Caco-2 (cell line): ENCODE measurements at regions of chr11 and their contacts with region 1.

Region 1: DNA sequence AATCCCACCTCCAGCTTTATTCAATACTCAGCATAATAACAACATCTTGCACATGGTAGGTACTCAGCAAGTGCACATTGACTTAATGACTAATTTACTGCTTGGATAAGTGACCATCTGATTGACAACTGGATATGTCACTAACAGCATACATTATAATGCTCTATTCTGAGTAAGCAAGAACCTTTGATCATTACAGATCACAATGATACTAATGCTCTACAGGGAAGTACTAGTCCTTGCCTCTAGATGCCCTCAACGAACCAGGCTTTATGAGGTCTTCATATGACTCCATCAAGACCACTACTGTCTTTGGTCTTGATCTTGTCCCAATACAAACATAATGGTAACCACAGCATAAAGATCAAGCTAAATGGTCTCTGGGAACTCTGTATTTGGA is 167.6 kb upstream of the MTMR2 start:
- DNase-seq: no peak
- H3K4me3 ChIP-seq: no peak overlapping the region
- H3K4me3 Mint-ChIP-seq: no peak overlapping the region
- H3K27ac Mint-ChIP-seq: peak overlapping the region; percentile 94
- H3K4me1 ChIP-seq: peaks cover 45% of the 10 kb centered on the region
- H3K4me1 Mint-ChIP-seq: peaks cover 59% of the 10 kb centered on the region
- H3K27me3 ChIP-seq: no peaks in the 10 kb centered on the region
- H3K27me3 Mint-ChIP-seq: no peaks in the 10 kb centered on the region
- CTCF ChIP-seq: peak; percentile 12 to 25

Region 2: GRCh38 chr11:95443386-95443785 is 648.1 kb before region 1 on chr11:
- CTCF ChIA-PET with region 1: no interaction called
- POLR2A ChIA-PET with region 1: no interaction called
- intact Hi-C with region 1: no loop called
- DNase-seq: no peak
- H3K4me3 ChIP-seq: no peak overlapping the region
- H3K4me3 Mint-ChIP-seq: no peak overlapping the region
- H3K27ac Mint-ChIP-seq: no peak overlapping the region
- H3K4me1 ChIP-seq: no peaks in the 10 kb centered on the region
- H3K4me1 Mint-ChIP-seq: no peaks in the 10 kb centered on the region
- H3K27me3 ChIP-seq: no peaks in the 10 kb centered on the region
- H3K27me3 Mint-ChIP-seq: no peaks in the 10 kb centered on the region
- CTCF ChIP-seq: no peak

Region 3: DNA sequence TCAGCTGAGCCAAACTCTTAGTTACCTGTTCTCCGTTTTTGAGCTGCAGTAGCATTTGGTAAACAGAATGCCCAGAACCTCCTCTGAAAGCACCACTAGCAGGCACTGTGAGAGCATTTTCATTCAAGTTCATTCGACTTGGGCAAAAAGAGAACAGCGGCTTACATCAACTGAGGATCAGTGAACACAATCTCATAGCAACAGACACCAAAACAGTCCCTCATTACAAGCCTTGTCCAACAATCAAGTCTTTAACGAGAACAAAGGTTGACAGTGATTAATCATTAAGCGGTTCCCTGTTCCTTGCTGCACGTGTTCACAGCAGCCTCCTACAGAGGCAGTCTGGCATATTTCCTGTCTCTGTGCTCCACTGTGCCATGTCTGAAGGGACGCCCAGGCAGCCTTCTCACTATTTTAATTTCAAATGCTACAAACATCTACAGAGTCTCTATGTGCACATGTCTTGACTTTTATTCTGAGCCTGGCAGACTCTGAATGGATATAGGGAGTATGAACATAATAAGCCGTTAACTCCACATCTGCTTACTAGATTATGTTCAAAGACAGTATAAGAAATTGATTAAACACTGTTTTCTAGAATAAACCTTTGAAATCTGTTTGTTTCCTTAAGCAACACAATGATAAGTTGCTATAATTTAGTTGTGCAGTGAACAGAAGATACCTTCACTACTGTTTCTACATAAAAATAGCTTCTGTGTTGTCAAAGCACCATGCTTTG is 79.2 kb before region 1 on chr11:
- CTCF ChIA-PET with region 1: no interaction called
- POLR2A ChIA-PET with region 1: no interaction called
- intact Hi-C with region 1: loop called (anchors 2 kb)
- DNase-seq: peak; percentile 62 to 69
- H3K4me3 ChIP-seq: no peak overlapping the region
- H3K4me3 Mint-ChIP-seq: no peak overlapping the region
- H3K27ac Mint-ChIP-seq: no peak overlapping the region
- H3K4me1 ChIP-seq: peaks cover 32% of the 10 kb centered on the region
- H3K4me1 Mint-ChIP-seq: peaks cover 14% of the 10 kb centered on the region
- H3K27me3 ChIP-seq: no peaks in the 10 kb centered on the region
- H3K27me3 Mint-ChIP-seq: no peaks in the 10 kb centered on the region
- CTCF ChIP-seq: peak; percentile 38 to 70

Region 4: DNA sequence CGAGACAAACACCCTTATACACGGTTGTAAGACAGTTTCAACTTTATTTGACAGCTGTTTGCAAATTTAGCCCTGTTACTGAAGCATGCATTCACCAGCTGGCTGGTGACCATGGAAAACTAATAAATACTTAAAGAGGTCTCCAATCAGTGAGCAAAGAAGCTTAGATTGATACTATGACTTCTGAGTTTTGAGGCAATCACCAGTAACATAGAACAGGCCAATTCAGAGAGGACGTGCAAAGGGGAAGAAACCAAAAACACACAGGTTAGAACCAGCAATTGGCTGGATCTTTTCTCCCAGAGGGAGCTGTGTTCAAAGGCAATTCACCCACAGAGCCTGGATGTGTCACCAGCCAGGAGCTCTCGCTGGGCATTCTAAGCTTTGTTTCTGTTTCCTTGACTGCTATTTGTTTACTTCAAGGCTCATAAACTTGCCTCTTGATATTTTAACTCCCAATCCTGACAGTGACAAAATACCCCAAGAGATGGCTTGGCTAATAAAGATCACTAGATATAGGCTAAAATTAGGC is 54.0 kb before region 1 on chr11:
- CTCF ChIA-PET with region 1: no interaction called
- POLR2A ChIA-PET with region 1: no interaction called
- intact Hi-C with region 1: no loop called
- DNase-seq: peak in 1 of 2 experiments; percentile 27
- H3K4me3 ChIP-seq: no peak overlapping the region
- H3K4me3 Mint-ChIP-seq: no peak overlapping the region
- H3K27ac Mint-ChIP-seq: peak overlapping the region; percentile 20
- H3K4me1 ChIP-seq: peaks cover 14% of the 10 kb centered on the region
- H3K4me1 Mint-ChIP-seq: peaks cover 14% of the 10 kb centered on the region
- H3K27me3 ChIP-seq: no peaks in the 10 kb centered on the region
- H3K27me3 Mint-ChIP-seq: no peaks in the 10 kb centered on the region
- CTCF ChIP-seq: no peak

Region 5: GRCh38 chr11:96067160-96067559 is 24.3 kb before region 1 on chr11:
- CTCF ChIA-PET with region 1: no interaction called
- POLR2A ChIA-PET with region 1: no interaction called
- intact Hi-C with region 1: loop called (anchors 1 kb)
- DNase-seq: no peak
- H3K4me3 ChIP-seq: no peak overlapping the region
- H3K4me3 Mint-ChIP-seq: no peak overlapping the region
- H3K27ac Mint-ChIP-seq: no peak overlapping the region
- H3K4me1 ChIP-seq: peaks cover 11% of the 10 kb centered on the region
- H3K4me1 Mint-ChIP-seq: peaks cover 43% of the 10 kb centered on the region
- H3K27me3 ChIP-seq: no peaks in the 10 kb centered on the region
- H3K27me3 Mint-ChIP-seq: no peaks in the 10 kb centered on the region
- CTCF ChIP-seq: no peak